Breast epithelium (tissue), 4 donors: ENCODE measurements at regions of chr18 and their contacts with region 1.

Region 1: GRCh38 chr18:30113454-30113853 is 929.1 kb downstream of the DSC3 start:
- DNase-seq: no peak
- H3K4me3 ChIP-seq: no peak overlapping the region
- H3K27ac ChIP-seq: no peak overlapping the region
- H3K4me1 ChIP-seq: no peaks in the 10 kb centered on the region
- H3K27me3 ChIP-seq: no peaks in the 10 kb centered on the region
- CTCF ChIP-seq: no peak
- POLR2A ChIP-seq: no peak

Region 2: DNA sequence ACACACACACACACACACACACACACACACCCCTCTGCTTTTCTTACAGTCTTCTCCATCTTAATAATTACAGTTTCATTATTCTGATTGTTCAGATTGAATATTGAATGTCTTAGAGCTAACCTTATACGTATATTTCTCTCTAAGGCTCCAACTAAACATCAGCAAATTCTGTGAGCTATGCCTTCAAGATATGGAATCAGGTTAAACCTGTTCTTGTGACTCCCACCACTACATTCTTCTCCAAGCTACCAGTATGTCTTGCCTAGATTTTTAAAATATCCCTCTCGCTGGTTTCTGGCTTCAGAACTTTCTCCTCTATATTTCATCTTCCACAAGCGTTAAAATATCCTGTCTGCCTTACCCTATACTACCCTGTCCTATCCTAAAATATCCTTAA is 590.1 kb before region 1 on chr18:
- intact Hi-C with region 1: loop called (anchors 5 kb)
- DNase-seq: no peak
- H3K4me3 ChIP-seq: no peak overlapping the region
- H3K27ac ChIP-seq: no peak overlapping the region
- H3K4me1 ChIP-seq: no peaks in the 10 kb centered on the region
- H3K27me3 ChIP-seq: no peaks in the 10 kb centered on the region
- CTCF ChIP-seq: no peak
- POLR2A ChIP-seq: no peak